Activated CD4-positive, alpha-beta T cell treated with anti-CD3 and anti-CD28 coated beads, Interleukin-2, amount 10 ng/mL, durations not matched to agents 24 days and 14 days (primary cell): ENCODE measurements at regions of chr5 and their contacts with region 1.

Region 1: GRCh38 chr5:32444431-32445286 is at the start of gene ZFR:
- DNase-seq: peak; percentile 98
- H3K4me3 Mint-ChIP-seq: peak within 1 kb of the TSS; percentile 98
- H3K27ac Mint-ChIP-seq: peak within 1 kb of the TSS; percentile 98
- H3K4me1 Mint-ChIP-seq: peaks cover 29% of the 10 kb centered on the region
- H3K27me3 Mint-ChIP-seq: peaks cover 11% of the 10 kb centered on the region
- total RNA-seq, gene ZFR: 68.1 and 70.4 TPM in 2 replicates

Region 2: DNA sequence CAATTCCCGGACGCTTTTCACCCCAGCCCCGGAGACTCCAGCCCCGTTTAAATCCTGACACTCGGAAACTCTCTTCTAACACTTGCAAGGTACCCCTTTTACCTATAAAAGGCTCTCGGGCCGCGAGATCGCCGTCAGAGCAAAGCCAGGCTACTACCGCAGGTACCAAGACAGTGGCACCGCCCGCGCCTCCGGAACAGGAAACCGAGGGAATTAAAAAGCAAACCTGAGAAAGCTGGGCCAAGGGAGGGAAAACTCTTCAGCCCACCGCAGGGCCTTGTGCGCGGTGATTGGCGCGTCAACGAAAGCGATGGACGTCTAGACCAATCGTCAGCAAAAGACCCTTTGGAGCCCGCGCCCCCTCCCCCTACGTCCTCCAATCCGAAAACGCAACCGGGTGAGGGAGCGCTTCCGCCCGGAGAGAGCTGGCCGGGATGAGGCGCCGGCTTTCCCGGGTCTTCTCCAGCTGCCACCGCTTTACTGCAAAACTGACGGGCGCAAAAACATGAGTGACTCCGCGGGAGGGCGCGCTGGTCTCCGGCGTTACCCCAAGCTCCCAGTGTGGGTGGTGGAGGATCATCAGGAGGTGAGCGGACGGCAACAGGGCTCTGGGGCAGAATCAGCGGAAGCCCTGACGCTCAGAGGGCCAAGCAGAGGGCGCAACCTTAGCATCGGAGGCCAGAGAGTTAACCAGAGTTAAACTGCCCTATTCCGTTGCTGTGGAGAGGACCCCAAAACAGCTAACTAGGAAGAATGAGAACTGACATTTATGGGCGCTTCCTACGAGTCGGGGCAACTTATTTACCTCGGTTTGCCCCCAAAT is 912.6 kb before region 1 on chr5 and contains the starts of genes C5orf22 and DROSHA:
- intact Hi-C with region 1: loop called (anchors 5 kb)
- DNase-seq: peak; percentile 98
- H3K4me3 Mint-ChIP-seq: peak within 1 kb of the TSS; percentile 91
- H3K27ac Mint-ChIP-seq: peak within 1 kb of the TSS; percentile 96
- H3K4me1 Mint-ChIP-seq: peaks cover 27% of the 10 kb centered on the region
- H3K27me3 Mint-ChIP-seq: no peaks in the 10 kb centered on the region
- total RNA-seq, gene C5orf22: 34.2 and 37.7 TPM in 2 replicates
- total RNA-seq, gene DROSHA: 86.5 and 88.7 TPM in 2 replicates

Region 3: GRCh38 chr5:32206509-32207354 is 237.9 kb before region 1 on chr5:
- intact Hi-C with region 1: loop called (anchors 5 kb)
- DNase-seq: no peak
- H3K4me3 Mint-ChIP-seq: no peak overlapping the region
- H3K27ac Mint-ChIP-seq: peak overlapping the region; percentile 62
- H3K4me1 Mint-ChIP-seq: peaks cover 17% of the 10 kb centered on the region
- H3K27me3 Mint-ChIP-seq: no peaks in the 10 kb centered on the region

Region 4: GRCh38 chr5:32312647-32313523 is 131.8 kb before region 1 on chr5 and contains the start of gene MTMR12:
- intact Hi-C with region 1: loop called (anchors 1 kb)
- DNase-seq: peak; percentile 100
- H3K4me3 Mint-ChIP-seq: peak within 1 kb of the TSS; percentile 96
- H3K27ac Mint-ChIP-seq: peak within 1 kb of the TSS; percentile 87
- H3K4me1 Mint-ChIP-seq: peaks cover 28% of the 10 kb centered on the region
- H3K27me3 Mint-ChIP-seq: no peaks in the 10 kb centered on the region
- total RNA-seq, gene MTMR12: 26.5 and 29.8 TPM in 2 replicates

Region 5: DNA sequence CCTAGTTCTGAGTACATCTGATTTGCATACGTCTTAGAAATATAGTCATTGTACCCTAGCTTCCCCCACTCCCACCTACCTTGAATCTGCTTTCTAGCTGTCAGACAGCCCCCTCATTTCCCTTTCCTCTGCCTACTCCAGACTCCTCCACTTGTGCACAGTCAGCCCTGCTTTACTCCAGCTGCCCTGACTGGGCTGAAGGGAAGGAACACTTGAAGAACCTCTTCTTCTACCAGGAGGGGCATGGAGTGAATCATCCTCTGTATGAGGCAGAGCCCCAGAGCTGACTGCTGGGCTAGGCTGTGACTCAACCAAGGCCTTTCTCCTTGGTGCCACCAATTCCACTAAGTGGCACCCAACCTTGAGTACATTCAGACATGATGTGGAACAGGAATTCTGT is 18.0 kb after region 1 on chr5:
- intact Hi-C with region 1: loop called (anchors 1 kb)
- DNase-seq: no peak
- H3K4me3 Mint-ChIP-seq: no peak overlapping the region
- H3K27ac Mint-ChIP-seq: peak overlapping the region; percentile 83
- H3K4me1 Mint-ChIP-seq: peaks cover 7% of the 10 kb centered on the region
- H3K27me3 Mint-ChIP-seq: peaks cover 2% of the 10 kb centered on the region

Region 6: GRCh38 chr5:32585446-32586275 is 141.0 kb after region 1 on chr5 and contains the start of gene SUB1:
- intact Hi-C with region 1: loop called (anchors 1 kb)
- DNase-seq: peak; percentile 98
- H3K4me3 Mint-ChIP-seq: peak within 1 kb of the TSS; percentile 94
- H3K27ac Mint-ChIP-seq: peak within 1 kb of the TSS; percentile 99
- H3K4me1 Mint-ChIP-seq: peaks cover 62% of the 10 kb centered on the region
- H3K27me3 Mint-ChIP-seq: peaks cover 1% of the 10 kb centered on the region
- total RNA-seq, gene SUB1: 403 and 404 TPM in 2 replicates